Panc1 (cell line): ENCODE measurements at regions of chrX and their contacts with region 1.

Region 1: DNA sequence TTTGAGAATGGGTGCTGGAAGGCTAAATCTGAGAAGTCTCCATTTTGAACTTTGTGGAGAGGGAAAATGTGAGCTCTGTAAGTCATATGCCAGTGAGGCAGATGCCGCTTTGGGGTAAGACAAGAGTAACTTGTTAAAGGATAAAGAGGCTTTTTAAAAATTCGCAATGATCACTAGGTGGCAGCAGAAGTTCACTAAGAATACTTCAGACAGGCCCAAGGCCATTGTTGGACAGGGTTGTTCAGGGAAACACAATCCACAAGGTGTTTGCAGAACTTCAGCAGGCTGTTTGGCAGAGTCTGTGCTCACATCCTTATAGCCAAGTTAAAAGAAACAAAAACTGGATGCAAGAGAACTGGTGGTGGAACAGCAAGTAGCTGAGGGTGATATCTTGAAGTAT is 13.7 kb upstream of the PIGA start:
- DNase-seq: peak; percentile 13
- ATAC-seq: peak; percentile 70; the same call in 1 of the 2 replicates
- H3K4me3 ChIP-seq: no peak overlapping the region
- H3K27ac ChIP-seq: no peak overlapping the region
- H3K4me1 ChIP-seq: no peaks in the 10 kb centered on the region
- H3K27me3 ChIP-seq: no peaks in the 10 kb centered on the region
- CTCF ChIP-seq: peak; percentile 65

Region 2: DNA sequence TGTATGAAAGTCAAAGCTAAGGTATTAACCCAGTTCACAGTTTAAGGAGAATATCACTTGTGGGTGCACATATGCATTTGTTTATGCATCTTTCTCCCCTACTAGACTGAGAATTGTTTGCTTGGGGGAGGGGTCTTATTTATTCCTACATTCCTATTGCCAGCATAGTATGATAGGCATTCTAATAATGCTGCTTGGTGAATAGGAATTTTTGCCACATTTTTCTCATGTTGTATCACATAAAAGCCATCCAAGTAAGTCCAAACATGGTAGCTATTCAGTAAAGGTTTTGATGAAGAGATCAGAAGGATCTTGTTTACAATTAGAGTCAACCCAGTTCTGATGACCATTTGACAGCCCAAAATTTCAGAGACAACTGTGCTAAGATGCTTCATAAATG is 127.7 kb before region 1 on chrX:
- CTCF ChIA-PET with region 1: no interaction called
- POLR2A ChIA-PET with region 1: no interaction called
- in situ Hi-C with region 1: no loop called
- intact Hi-C with region 1: no loop called
- DNase-seq: no peak
- ATAC-seq: no peak
- H3K4me3 ChIP-seq: no peak overlapping the region
- H3K27ac ChIP-seq: no peak overlapping the region
- H3K4me1 ChIP-seq: no peaks in the 10 kb centered on the region
- H3K27me3 ChIP-seq: no peaks in the 10 kb centered on the region
- CTCF ChIP-seq: no peak

Region 3: GRCh38 chrX:15468036-15468435 is 119.0 kb after region 1 on chrX:
- CTCF ChIA-PET with region 1: no interaction called
- POLR2A ChIA-PET with region 1: no interaction called
- in situ Hi-C with region 1: no loop called
- intact Hi-C with region 1: loop called (anchors 2 kb)
- DNase-seq: no peak
- ATAC-seq: no peak
- H3K4me3 ChIP-seq: no peak overlapping the region
- H3K27ac ChIP-seq: no peak overlapping the region
- H3K4me1 ChIP-seq: no peaks in the 10 kb centered on the region
- H3K27me3 ChIP-seq: no peaks in the 10 kb centered on the region
- CTCF ChIP-seq: peak; percentile 34

Region 4: DNA sequence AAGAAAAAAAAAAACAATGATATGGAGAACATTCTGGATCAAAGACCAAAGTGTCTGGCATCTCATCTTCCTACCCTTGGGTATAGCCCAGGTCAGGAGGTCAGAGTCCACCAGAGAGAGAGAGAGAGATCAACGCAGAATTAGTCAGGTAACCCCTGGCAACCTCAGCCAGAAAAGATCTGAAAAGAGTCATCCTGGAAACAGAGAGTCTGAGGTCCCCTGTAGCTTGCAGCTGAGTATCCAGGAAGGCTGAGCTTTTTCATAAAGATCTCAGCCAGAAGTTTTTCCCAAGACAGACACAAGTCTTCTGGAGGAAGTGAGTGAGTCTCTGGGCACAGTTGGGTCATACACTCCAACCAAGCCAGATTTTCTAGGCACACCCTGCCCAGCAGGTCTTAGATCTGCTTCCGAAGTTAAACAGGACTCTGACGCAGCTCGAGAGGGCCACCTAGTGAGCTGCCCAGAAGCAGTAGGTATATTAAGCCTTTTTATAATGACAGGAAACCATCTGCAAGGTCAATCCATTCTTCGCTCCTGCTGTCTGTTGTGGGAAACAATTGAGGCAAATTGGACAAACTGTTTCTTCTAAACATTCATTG is 216.0 kb after region 1 on chrX:
- CTCF ChIA-PET with region 1: no interaction called
- POLR2A ChIA-PET with region 1: no interaction called
- in situ Hi-C with region 1: no loop called
- intact Hi-C with region 1: loop called (anchors 10 kb)
- DNase-seq: peak; percentile 8
- ATAC-seq: no peak; the same call in 1 of the 2 replicates
- H3K4me3 ChIP-seq: no peak overlapping the region
- H3K27ac ChIP-seq: no peak overlapping the region
- H3K4me1 ChIP-seq: no peaks in the 10 kb centered on the region
- H3K27me3 ChIP-seq: no peaks in the 10 kb centered on the region
- CTCF ChIP-seq: peak; percentile 69